Activated CD4-positive, alpha-beta memory T cell treated with anti-CD3 and anti-CD28 coated beads, Interleukin-2, amount 10 ng/mL, durations not matched to agents 7 days and 5 days (primary cell): ENCODE measurements at regions of chr17 and their contacts with region 1.

Region 1: GRCh38 chr17:75109407-75110233 is at the start of gene ARMC7:
- DNase-seq: peak; percentile 92
- H3K4me3 Mint-ChIP-seq: peak within 1 kb of the TSS; percentile 84
- H3K27ac Mint-ChIP-seq: peak within 1 kb of the TSS; percentile 79
- H3K4me1 Mint-ChIP-seq: peaks cover 41% of the 10 kb centered on the region
- H3K27me3 Mint-ChIP-seq: no peaks in the 10 kb centered on the region
- total RNA-seq, gene ARMC7: 17.1 to 17.9 TPM

Region 2: DNA sequence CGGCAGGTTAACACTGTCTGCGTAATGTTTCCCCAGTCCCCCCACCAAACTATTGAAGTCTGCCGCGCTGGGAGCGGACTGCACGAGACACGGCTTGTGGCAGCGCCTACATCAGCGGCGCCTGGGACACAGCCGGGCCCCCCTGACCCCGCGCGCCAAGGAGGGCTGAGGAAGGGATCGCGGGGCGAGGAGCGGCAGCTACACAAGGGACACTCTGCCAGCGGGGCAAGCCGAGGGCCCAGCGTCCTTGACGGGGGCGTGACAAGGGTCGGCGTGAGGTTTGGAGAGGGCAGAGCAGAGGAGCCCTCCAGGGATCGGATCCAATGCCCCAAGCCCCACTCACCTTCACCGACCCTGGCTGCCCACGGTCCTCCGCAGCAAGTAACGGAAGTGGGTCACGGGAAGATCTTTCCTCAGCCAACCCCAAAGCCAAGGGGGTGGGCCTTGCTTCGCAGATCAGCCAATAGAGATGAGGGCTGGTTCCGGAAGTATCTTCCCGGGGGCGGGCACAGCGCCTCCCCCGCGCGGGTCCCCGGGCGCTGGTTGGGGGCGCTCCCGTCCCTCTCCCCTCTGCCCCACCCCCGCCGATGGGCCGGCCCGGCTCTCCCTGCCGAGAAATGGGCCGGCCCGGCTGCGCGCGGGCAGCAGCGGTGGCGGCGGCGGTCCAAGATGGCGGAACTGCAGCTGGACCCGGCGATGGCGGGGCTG is 62.9 kb before region 1 on chr17 and contains the starts of genes ATP5PD and KCTD2:
- CTCF ChIA-PET with region 1: interaction called, 11 read pairs
- POLR2A ChIA-PET with region 1: interaction called, 6 read pairs
- DNase-seq: peak; percentile 96
- H3K4me3 Mint-ChIP-seq: peak within 1 kb of the TSS; percentile 96
- H3K27ac Mint-ChIP-seq: peak within 1 kb of the TSS; percentile 91
- H3K4me1 Mint-ChIP-seq: peaks cover 45% of the 10 kb centered on the region
- H3K27me3 Mint-ChIP-seq: no peaks in the 10 kb centered on the region
- total RNA-seq, gene ATP5PD: 242 TPM
- total RNA-seq, gene KCTD2: 24.2 to 24.9 TPM

Region 3: DNA sequence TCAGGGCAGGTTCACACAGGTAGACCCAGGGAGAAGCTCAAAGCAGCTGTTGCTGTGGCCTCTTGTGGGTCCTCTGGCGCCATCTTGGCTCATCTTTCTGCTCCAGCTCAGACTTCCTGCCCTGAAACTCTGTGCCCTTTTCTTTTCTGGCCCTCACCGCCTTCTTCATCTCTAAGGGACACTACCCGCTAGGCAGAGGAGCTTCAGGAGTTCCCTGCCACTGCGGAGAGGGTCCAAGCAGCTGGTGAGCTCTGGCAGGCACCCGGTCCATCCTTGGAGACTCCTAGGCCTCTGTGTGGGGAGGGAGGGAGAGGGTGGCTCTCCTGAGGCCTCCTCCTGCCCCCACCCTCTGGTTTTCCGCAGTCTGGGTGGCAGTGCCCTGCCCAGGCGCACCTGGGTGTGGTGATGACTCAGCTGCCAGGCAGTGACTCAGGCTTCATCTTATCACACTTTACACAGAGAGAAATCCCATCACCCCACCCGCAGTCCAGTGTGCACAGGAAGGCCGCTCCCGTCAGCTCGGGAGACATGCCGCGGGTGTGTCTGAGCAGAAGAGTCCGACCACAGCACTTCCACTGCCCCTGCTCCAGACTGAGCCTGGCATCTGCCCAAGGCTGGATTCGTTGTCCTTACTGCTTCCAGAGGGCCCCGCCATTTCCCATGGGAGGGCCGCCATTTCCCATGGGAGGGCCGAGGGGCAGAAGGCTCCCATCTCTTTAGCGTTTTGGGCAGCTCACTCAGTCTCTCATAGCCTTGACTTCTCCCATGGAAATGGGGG is 14.6 kb after region 1 on chr17:
- CTCF ChIA-PET with region 1: interaction called, 130 read pairs
- POLR2A ChIA-PET with region 1: interaction called, 65 read pairs
- DNase-seq: peak; percentile 84
- H3K4me3 Mint-ChIP-seq: peak overlapping the region; percentile 34
- H3K27ac Mint-ChIP-seq: peak overlapping the region; percentile 90
- H3K4me1 Mint-ChIP-seq: peaks cover 56% of the 10 kb centered on the region
- H3K27me3 Mint-ChIP-seq: no peaks in the 10 kb centered on the region

Region 4: GRCh38 chr17:75154195-75155106 is 44.8 kb after region 1 on chr17 and contains the start of gene JPT1:
- CTCF ChIA-PET with region 1: interaction called, 12 read pairs
- POLR2A ChIA-PET with region 1: interaction called, 23 read pairs
- DNase-seq: peak; percentile 99
- H3K4me3 Mint-ChIP-seq: peak within 1 kb of the TSS; percentile 93
- H3K27ac Mint-ChIP-seq: peak within 1 kb of the TSS; percentile 86
- H3K4me1 Mint-ChIP-seq: peaks cover 41% of the 10 kb centered on the region
- H3K27me3 Mint-ChIP-seq: no peaks in the 10 kb centered on the region
- total RNA-seq, gene JPT1: 305 to 329 TPM

Region 5: GRCh38 chr17:75199886-75200618 is 90.4 kb after region 1 on chr17:
- CTCF ChIA-PET with region 1: interaction called, 158 read pairs
- POLR2A ChIA-PET with region 1: interaction called, 22 read pairs
- DNase-seq: no peak
- H3K4me3 Mint-ChIP-seq: no peak overlapping the region
- H3K27ac Mint-ChIP-seq: no peak overlapping the region
- H3K4me1 Mint-ChIP-seq: peaks cover 13% of the 10 kb centered on the region
- H3K27me3 Mint-ChIP-seq: peaks cover 1% of the 10 kb centered on the region

Region 6: DNA sequence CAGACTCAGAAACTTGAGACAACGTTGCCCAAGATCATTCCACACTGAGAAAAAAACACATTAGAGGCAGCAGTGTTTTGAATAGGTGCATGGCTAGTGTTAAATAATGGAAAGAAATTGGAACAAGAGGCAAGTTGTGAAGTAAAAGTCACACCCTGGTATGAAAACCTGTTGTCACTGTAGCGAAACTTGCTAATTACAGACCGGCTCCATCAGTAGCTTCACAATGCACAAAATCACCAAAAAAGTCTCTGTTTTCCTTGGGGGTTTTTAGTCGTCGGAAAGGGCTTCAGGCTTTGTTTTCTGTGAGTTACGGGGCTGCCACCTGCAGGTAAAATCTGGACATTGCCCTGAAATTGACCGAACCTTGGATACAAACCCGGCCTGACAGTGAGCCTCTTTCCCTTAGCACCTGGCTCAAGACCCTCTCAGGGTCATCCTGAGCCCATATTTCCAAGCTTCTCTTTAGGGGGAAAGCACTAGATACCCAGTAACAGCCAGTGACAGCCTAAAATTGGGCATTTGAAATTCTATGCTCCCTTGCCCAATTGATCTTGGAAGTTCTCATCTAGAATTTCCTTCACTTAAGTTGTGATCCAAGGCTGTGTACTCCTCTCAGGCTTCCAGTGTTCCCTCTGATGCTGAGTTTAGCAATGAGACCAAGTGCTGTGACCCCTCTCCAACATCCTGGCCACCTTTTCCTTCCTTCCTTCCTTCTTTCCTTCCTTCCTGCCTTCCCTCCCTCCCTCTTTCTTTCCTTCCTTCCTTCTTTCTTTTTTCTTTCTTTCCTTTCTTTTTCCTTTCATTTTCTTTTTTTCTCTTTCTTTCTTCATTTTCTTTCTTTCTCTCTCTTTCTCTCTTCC is 303.1 kb after region 1 on chr17:
- CTCF ChIA-PET with region 1: interaction called, 12 read pairs
- POLR2A ChIA-PET with region 1: no interaction called
- DNase-seq: peak; percentile 81
- H3K4me3 Mint-ChIP-seq: no peak overlapping the region
- H3K27ac Mint-ChIP-seq: peak overlapping the region; percentile 29
- H3K4me1 Mint-ChIP-seq: peaks cover 26% of the 10 kb centered on the region
- H3K27me3 Mint-ChIP-seq: peaks cover 12% of the 10 kb centered on the region